Vagina (tissue), 2 donors: ENCODE measurements at regions of chr5 and their contacts with region 1.

Region 1: DNA sequence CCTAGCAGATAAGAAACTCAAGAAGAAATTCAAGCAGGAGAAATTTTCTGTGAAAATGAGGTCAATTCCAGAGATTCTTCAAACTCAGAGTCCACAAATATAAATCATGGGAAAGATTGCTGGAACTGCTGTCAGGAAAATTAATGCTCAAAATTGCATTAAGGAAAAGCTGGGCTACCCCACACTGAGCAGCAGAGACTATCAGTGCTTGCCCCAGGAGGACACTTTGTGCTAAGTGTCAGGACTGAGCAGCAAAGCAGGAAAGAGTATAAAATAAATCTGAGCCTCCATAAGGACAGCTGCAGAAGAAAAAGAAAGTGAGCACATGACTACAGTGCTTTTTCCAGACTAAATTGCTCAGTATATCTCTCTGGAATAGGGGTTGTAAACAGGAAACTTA is 81.6 kb downstream of the RGS7BP start:
- DNase-seq: no peak
- H3K4me3 ChIP-seq: no peak overlapping the region
- H3K27ac ChIP-seq: no peak overlapping the region
- H3K4me1 ChIP-seq: no peaks in the 10 kb centered on the region
- H3K27me3 ChIP-seq: no peaks in the 10 kb centered on the region
- CTCF ChIP-seq: no peak
- POLR2A ChIP-seq: no peak

Region 2: DNA sequence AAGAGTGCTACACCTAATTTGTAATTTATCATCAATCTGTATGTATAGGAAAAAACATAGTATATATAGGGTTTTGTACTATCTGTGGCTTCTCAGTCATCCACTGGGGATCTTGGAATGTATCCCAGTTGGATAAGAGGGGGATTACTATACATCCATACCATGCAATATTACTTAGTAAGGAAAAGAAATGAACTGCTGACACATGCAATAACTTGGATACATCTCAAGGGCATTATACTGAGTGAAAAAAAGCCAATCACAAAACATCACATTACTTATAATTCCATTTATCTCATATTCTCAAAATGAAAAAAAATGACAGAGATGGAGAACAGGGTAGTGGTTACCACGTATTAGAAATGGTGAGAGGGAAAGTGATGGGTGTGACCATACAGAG is 189.8 kb before region 1 on chr5:
- intact Hi-C with region 1: no loop called
- DNase-seq: no peak
- H3K4me3 ChIP-seq: no peak overlapping the region
- H3K27ac ChIP-seq: no peak overlapping the region
- H3K4me1 ChIP-seq: no peaks in the 10 kb centered on the region
- H3K27me3 ChIP-seq: no peaks in the 10 kb centered on the region
- CTCF ChIP-seq: no peak
- POLR2A ChIP-seq: no peak

Region 3: DNA sequence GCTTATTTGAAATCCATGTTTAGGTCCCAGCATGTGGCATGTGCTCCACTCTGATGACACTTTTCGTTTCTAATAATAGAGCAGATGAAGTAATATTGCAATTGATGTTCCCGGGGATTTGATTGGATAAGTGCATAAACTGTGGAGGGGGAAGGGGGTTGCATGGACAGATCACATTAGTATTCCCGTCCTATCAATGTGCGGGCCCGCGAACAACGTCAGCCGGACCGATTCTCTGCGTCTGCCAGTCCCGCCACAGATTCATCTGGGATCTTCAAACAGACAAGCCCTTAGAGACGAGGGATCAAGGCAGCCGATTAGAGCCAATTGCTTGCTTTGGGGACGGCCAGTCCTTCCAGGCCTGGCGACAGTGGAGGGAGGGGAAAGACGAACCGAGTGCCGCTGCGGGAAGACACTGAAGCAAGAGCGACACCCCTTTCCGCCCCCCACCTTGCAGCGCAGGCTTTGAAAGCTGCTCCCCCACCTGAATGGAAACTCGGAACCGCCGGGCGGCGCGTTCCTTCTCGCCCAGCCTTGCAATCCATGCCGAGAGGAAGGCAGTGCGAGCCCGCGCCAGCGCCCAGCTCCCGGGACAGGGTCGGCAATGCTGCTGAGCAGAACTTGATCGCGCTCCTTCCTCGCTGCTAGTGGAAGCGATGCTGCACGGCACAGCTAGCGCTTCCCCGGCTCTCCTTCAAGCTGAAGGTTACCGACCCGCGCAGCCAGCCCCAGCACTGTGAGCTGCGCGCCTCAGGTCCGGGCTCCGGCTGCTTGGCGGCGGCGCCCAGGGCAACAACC is 81.4 kb before region 1 on chr5 and contains the start of gene RGS7BP:
- intact Hi-C with region 1: loop called (anchors 10 kb)
- DNase-seq: no peak
- H3K4me3 ChIP-seq: peak within 1 kb of the TSS; percentile 35
- H3K27ac ChIP-seq: no peak within 1 kb of the TSS
- H3K4me1 ChIP-seq: peaks cover 5% of the 10 kb centered on the region
- H3K27me3 ChIP-seq: no peaks in the 10 kb centered on the region
- CTCF ChIP-seq: no peak
- POLR2A ChIP-seq: no peak
- total RNA-seq, gene RGS7BP: 11.8 TPM